Activated CD4-positive, alpha-beta memory T cell treated with anti-CD3 and anti-CD28 coated beads, Interleukin-2, amount 10 ng/mL, durations not matched to agents 7 days and 5 days (primary cell): ENCODE measurements at regions of chr14 and their contacts with region 1.

Region 1: DNA sequence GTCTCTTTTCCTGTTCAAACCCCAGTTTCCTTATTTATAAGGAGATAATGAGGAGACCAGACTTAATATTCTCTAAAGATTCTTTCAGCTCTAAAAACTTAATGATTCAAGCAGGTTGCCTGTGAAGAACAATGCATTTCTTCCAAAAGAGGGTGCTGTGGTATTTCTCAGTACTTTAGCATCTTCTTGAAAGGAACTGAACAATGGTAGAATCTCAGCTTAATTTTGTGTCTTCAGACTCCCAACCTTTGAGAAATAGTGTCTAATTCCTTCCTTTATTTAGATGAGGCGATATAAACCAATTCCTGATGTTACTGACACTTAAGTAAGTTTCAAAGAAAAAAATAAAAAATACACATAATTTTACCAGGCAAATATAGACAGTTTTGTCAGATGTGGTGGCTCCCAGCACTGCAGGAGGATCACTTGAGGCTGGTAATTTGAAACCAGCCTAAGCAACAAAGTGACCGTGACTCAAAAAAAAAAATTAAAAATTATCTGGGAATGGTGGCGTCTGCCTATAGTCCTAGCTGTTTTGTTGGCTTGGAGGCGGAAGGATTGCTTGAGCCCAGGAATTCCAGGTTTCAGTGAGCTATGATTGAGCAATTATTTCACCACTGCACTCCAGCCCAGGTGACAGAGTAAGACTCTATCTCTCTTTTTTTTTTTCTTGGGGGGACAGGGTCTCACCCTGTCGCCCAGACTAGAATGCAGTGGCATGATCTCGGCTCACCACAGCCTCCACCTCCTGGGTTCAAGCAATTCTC is 76.9 kb upstream of the PSMA6 start:
- DNase-seq: no peak
- H3K4me3 Mint-ChIP-seq: no peak overlapping the region
- H3K27ac Mint-ChIP-seq: no peak overlapping the region
- H3K4me1 Mint-ChIP-seq: peaks cover 22% of the 10 kb centered on the region
- H3K27me3 Mint-ChIP-seq: no peaks in the 10 kb centered on the region

Region 2: GRCh38 chr14:35229495-35230089 is 14.3 kb after region 1 on chr14:
- CTCF ChIA-PET with region 1: interaction called, 12 read pairs
- POLR2A ChIA-PET with region 1: no interaction called
- DNase-seq: no peak
- H3K4me3 Mint-ChIP-seq: no peak overlapping the region
- H3K27ac Mint-ChIP-seq: no peak overlapping the region
- H3K4me1 Mint-ChIP-seq: peaks cover 19% of the 10 kb centered on the region
- H3K27me3 Mint-ChIP-seq: no peaks in the 10 kb centered on the region

Region 3: DNA sequence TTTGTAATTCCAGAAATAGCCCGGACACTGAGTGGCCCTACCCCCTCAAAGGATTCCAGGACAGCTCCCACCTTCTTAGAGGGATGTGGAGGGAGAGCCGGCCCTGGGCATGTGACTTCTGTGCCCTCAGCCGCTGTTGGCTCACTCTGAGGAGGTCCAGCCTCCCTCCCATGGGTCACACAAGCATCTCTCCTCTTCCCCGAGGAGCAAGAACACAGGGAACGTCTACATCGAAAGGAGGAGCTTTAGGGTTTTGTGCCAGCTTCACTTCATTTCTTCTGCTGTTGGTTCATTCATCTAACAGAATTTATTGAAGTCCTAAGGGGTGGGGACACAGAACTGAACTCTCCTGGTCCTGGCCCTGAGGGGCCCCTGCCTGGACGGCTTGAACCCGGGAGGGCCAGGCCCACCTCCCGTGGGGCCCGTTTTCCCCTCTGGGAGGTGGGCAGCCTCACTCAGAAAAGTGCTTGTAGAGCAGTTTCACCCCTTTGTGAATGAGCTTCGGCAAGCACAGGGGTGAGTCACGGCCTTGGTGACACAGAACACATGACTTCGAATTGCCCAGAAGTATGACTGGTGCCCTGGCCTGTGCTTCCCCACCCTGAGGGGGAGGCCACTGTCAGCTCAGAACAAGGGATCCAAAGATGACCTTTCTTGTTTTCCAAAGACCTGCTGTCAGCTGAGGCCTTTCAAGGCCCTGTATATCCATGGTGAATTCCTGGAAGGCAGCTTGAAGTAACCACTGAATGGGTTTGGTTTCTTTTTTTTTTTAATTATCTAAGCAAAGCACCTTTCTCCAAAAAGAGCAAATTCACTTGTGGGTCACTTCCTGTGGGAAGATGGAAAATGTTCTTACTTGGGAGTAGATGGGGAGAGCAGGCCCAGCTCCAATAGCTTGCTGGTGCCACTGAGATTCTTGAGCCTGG is 150.1 kb after region 1 on chr14:
- CTCF ChIA-PET with region 1: no interaction called
- POLR2A ChIA-PET with region 1: no interaction called
- DNase-seq: peak; percentile 76
- H3K4me3 Mint-ChIP-seq: no peak overlapping the region
- H3K27ac Mint-ChIP-seq: peak overlapping the region; percentile 66
- H3K4me1 Mint-ChIP-seq: peaks cover 33% of the 10 kb centered on the region
- H3K27me3 Mint-ChIP-seq: no peaks in the 10 kb centered on the region